Prostate gland (tissue), 2 donors: ENCODE measurements at regions of chr3 and their contacts with region 1.

Region 1: GRCh38 chr3:101676765-101677435 is at the start of gene ZBTB11:
- DNase-seq: peak; percentile 100
- H3K4me3 ChIP-seq: peak within 1 kb of the TSS; percentile 70 to 97
- H3K27ac ChIP-seq: peak within 1 kb of the TSS; percentile 94 to 98
- H3K4me1 ChIP-seq: peaks cover 9% of the 10 kb centered on the region
- H3K27me3 ChIP-seq: no peaks in the 10 kb centered on the region
- CTCF ChIP-seq: peak in 3 of 4 experiments; percentile 28 to 57 (median 54)
- POLR2A ChIP-seq: peak; percentile 89
- total RNA-seq, gene ZBTB11: 20.5 to 21.2 TPM

Region 2: DNA sequence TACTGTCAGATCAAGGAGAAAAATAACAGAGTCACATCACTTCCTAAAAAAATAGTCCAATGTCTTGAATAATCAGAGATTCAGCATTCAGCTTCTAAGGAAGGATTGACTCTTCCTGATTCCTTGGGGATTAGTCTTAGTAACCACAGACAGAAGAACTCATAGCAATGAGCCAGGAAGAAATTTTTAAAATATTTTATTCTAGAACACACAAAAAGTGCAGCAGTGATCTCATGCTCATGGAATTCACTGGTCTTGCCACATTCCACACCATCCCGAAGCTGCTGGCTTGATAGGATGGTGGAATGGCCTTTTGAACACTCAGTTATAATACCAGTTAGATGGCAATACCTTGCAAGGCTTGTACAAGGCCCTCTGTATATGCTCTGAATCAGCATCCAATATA is 640.7 kb before region 1 on chr3:
- intact Hi-C with region 1: no loop called
- DNase-seq: peak; percentile 18
- H3K4me3 ChIP-seq: no peak overlapping the region
- H3K27ac ChIP-seq: no peak overlapping the region
- H3K4me1 ChIP-seq: no peaks in the 10 kb centered on the region
- H3K27me3 ChIP-seq: no peaks in the 10 kb centered on the region
- CTCF ChIP-seq: no peak
- POLR2A ChIP-seq: no peak

Region 3: DNA sequence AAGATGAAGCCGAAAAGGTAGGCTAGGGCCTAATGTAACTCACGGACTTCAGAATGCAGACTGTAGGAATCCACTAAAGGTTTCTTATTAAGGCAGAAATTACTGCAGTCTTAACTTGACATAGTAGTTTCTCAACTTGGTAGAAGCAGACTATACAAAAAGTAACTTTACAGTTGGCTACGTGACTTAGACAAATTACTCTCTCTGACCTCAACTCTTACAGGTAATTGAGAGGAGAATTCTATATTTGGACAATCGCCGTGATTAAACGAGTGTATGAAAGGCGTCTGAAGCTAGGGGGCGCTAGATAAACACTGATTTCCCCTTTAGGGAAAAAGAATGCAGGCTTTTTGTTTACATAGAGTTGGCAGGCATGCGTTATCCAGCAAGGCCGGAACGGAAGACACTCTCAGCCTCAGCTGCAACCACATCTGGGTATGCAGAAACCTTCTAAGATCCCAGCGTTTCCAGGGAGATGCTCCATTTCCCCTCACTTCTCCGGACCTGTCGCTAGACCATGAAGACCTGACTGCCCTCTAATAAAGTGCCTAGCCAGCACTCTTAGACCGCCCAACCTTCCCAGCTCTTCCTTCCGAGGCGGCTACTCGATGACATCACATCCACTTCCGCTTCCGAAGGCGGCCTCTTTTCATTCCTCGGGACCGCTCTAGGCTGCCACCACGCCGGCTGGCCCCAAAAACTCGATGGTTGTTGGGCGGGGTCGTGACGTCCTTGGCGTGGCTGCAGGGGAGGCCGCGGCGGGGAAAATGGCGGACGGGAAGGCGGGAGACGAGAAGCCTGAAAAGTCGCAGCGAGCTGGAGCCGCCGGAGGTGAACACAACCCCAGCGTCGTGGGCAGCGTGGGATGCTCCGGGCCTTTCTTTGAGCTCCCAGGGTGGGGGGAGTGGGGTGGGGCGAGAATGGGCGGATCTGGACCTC is 103.2 kb before region 1 on chr3 and contains the start of gene PCNP:
- intact Hi-C with region 1: loop called (anchors 5 kb)
- DNase-seq: peak; percentile 99
- H3K4me3 ChIP-seq: peak within 1 kb of the TSS; percentile 91 to 95
- H3K27ac ChIP-seq: peak within 1 kb of the TSS; percentile 98 to 99
- H3K4me1 ChIP-seq: no peaks in the 10 kb centered on the region
- H3K27me3 ChIP-seq: no peaks in the 10 kb centered on the region
- CTCF ChIP-seq: peak; percentile 75 to 95 (median 94)
- POLR2A ChIP-seq: peak; percentile 63
- total RNA-seq, gene PCNP: 59.2 to 92.9 TPM